Naive thymus-derived CD4-positive, alpha-beta T cell (primary cell): ENCODE measurements at regions of chr5 and their contacts with region 1.

Region 1: GRCh38 chr5:143002459-143003328 is 232.5 kb downstream of the ARHGAP26 start:
- DNase-seq: peak in 8 of 9 donors; percentile 40 to 66 (median 50)
- ATAC-seq: peak; percentile 86
- H3K4me3 ChIP-seq: peak overlapping the region; percentile 3
- H3K4me3 Mint-ChIP-seq: peak overlapping the region; percentile 22 to 80 (median 62)
- H3K27ac ChIP-seq: peak overlapping the region; percentile 68
- H3K27ac Mint-ChIP-seq: peak overlapping the region; percentile 78 to 98 (median 90)
- H3K4me1 ChIP-seq: peaks cover 31 to 66% of the 10 kb centered on the region in 2 donors
- H3K4me1 Mint-ChIP-seq: peaks cover 37 to 90% (median 50%) of the 10 kb centered on the region in 7 donors
- H3K27me3 ChIP-seq: no peaks in the 10 kb centered on the region
- H3K27me3 Mint-ChIP-seq: no peaks in the 10 kb centered on the region

Region 2: DNA sequence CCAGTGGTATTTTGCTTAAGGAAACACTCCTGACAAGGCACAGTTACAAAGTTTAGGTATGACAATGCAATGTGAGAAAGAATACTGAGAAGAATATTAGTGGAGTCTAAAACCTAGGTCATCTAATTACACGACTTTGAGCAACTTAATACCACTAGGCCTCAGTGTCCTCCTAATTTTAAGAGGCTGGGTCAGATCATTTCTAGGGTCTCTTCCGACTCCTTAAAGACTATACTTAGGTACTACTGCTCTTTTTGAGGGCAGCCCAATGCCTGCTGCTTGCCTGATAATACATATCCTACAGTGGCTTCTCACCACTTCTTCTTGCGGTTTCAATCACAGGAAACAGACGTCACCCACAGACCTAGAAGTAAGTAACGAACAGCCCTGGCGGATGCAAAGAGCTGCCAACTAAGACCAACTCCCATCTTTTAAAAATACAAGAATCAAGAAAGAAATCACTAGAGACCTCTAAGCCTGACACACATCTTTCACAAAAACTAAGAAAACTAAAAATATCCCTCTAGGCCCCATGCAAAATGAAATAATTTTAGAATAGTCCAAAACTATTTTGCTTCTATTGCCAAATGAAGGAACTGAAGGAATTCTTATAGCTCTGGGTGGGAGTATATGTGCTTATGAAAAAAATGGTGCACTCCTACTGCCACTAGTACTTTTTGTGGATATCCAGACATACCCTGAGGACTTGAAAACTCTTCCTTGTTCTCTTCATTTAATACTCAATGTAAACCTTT is 1397.0 kb before region 1 on chr5:
- CTCF ChIA-PET with region 1: no interaction called
- POLR2A ChIA-PET with region 1: no interaction called
- intact Hi-C with region 1: loop called in 1 of 2 experiments (anchors 10 kb)
- DNase-seq: peak in 8 of 9 donors; percentile 60 to 90 (median 88)
- ATAC-seq: peak; percentile 95
- H3K4me3 ChIP-seq: peak overlapping the region; percentile 37
- H3K4me3 Mint-ChIP-seq: peak overlapping the region; percentile 13 to 88 (median 80)
- H3K27ac ChIP-seq: peak overlapping the region; percentile 72
- H3K27ac Mint-ChIP-seq: peak overlapping the region; percentile 83 to 96 (median 89)
- H3K4me1 ChIP-seq: peaks cover 86 to 87% of the 10 kb centered on the region in 2 donors
- H3K4me1 Mint-ChIP-seq: peaks cover 60 to 97% (median 90%) of the 10 kb centered on the region in 7 donors
- H3K27me3 ChIP-seq: no peaks in the 10 kb centered on the region
- H3K27me3 Mint-ChIP-seq: no peaks in the 10 kb centered on the region

Region 3: GRCh38 chr5:142012792-142013388 is 989.8 kb before region 1 on chr5 and contains the start of gene GNPDA1:
- CTCF ChIA-PET with region 1: no interaction called
- POLR2A ChIA-PET with region 1: no interaction called
- intact Hi-C with region 1: loop called in 1 of 2 experiments (anchors 10 kb)
- DNase-seq: peak; percentile 38 to 81 (median 54)
- ATAC-seq: peak; percentile 87
- H3K4me3 ChIP-seq: peak within 1 kb of the TSS; percentile 68
- H3K4me3 Mint-ChIP-seq: peak within 1 kb of the TSS; percentile 76 to 93 (median 88)
- H3K27ac ChIP-seq: peak within 1 kb of the TSS; percentile 76
- H3K27ac Mint-ChIP-seq: peak within 1 kb of the TSS; percentile 87 to 93 (median 90)
- H3K4me1 ChIP-seq: peaks cover 40 to 53% of the 10 kb centered on the region in 2 donors
- H3K4me1 Mint-ChIP-seq: peaks cover 34 to 86% (median 80%) of the 10 kb centered on the region in 7 donors
- H3K27me3 ChIP-seq: no peaks in the 10 kb centered on the region
- H3K27me3 Mint-ChIP-seq: no peaks in the 10 kb centered on the region
- total RNA-seq, gene GNPDA1: 13.3 to 60.4 (median 26.4) TPM

Region 4: GRCh38 chr5:142977363-142978051 is 25.2 kb before region 1 on chr5:
- CTCF ChIA-PET with region 1: no interaction called
- POLR2A ChIA-PET with region 1: no interaction called
- intact Hi-C with region 1: loop called (anchors 1 to 2 kb)
- DNase-seq: peak in 2 of 9 donors; percentile 6 to 45
- ATAC-seq: peak; percentile 92
- H3K4me3 ChIP-seq: peak overlapping the region; percentile 15
- H3K4me3 Mint-ChIP-seq: peak overlapping the region in 2 of 10 donors; percentile 53 to 82
- H3K27ac ChIP-seq: no peak overlapping the region
- H3K27ac Mint-ChIP-seq: peak overlapping the region in 6 of 9 donors; percentile 20 to 95 (median 42)
- H3K4me1 ChIP-seq: peaks cover 0 to 93% of the 10 kb centered on the region in 2 donors
- H3K4me1 Mint-ChIP-seq: peaks cover 19 to 88% (median 45%) of the 10 kb centered on the region in 7 donors
- H3K27me3 ChIP-seq: no peaks in the 10 kb centered on the region
- H3K27me3 Mint-ChIP-seq: no peaks in the 10 kb centered on the region

Region 5: GRCh38 chr5:143222287-143223231 is 219.9 kb after region 1 on chr5:
- CTCF ChIA-PET with region 1: no interaction called
- POLR2A ChIA-PET with region 1: no interaction called
- intact Hi-C with region 1: loop called in 1 of 2 experiments (anchors 1 kb)
- DNase-seq: peak; percentile 13 to 55 (median 27)
- ATAC-seq: peak; percentile 81
- H3K4me3 ChIP-seq: peak overlapping the region; percentile 7
- H3K4me3 Mint-ChIP-seq: peak overlapping the region; percentile 9 to 80 (median 54)
- H3K27ac ChIP-seq: peak overlapping the region; percentile 40
- H3K27ac Mint-ChIP-seq: peak overlapping the region; percentile 60 to 94 (median 88)
- H3K4me1 ChIP-seq: peaks cover 0 to 30% of the 10 kb centered on the region in 2 donors
- H3K4me1 Mint-ChIP-seq: peaks cover 33 to 76% (median 40%) of the 10 kb centered on the region in 7 donors
- H3K27me3 ChIP-seq: no peaks in the 10 kb centered on the region
- H3K27me3 Mint-ChIP-seq: no peaks in the 10 kb centered on the region

Region 6: DNA sequence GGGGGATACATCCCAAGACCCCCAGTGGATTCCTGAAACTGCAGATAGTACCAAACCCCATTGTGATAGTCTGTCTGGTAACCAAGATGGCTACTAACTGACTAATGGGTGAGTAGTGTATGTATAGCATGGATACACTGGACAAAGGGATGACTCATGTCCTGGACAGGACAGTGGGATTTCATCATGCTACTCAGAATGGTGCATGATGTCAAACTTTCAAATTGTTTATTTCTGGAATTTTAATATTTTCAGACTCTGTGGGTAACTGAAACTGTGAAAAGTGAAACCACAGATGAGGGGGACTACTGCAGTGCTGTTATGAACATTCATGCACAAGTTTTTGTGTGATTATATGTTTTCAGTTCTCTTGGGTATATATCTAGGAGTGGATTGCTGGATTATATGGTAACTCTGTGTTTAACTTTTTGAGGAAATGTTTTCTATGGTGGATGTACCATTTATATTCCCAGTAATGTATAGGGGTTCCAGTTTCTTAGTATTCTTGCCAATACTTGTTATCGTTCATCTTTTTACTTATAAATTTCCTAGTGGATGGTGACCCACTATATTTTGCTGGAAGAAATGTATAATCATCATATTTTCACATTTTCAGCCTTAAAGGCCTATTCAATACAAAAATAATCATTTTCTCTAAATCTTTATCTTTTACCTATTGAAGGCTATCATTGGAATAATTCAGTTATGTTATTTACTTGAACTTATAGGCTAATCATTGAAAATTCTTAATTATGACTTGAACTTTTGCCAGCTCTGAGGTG is 259.9 kb after region 1 on chr5:
- CTCF ChIA-PET with region 1: no interaction called
- POLR2A ChIA-PET with region 1: no interaction called
- intact Hi-C with region 1: no loop called
- DNase-seq: no peak
- ATAC-seq: peak; percentile 82
- H3K4me3 ChIP-seq: no peak overlapping the region
- H3K4me3 Mint-ChIP-seq: no peak overlapping the region
- H3K27ac ChIP-seq: no peak overlapping the region
- H3K27ac Mint-ChIP-seq: no peak overlapping the region
- H3K4me1 ChIP-seq: no peaks in the 10 kb centered on the region
- H3K4me1 Mint-ChIP-seq: peaks cover 0 to 4% (median 0%) of the 10 kb centered on the region in 7 donors
- H3K27me3 ChIP-seq: no peaks in the 10 kb centered on the region
- H3K27me3 Mint-ChIP-seq: no peaks in the 10 kb centered on the region

Region 7: GRCh38 chr5:143968011-143968878 is 965.6 kb after region 1 on chr5:
- CTCF ChIA-PET with region 1: interaction called, 3 read pairs
- POLR2A ChIA-PET with region 1: no interaction called
- intact Hi-C with region 1: loop called (anchors 1 to 5 kb)
- DNase-seq: peak in 6 of 9 donors; percentile 13 to 43 (median 27)
- ATAC-seq: no peak
- H3K4me3 ChIP-seq: no peak overlapping the region
- H3K4me3 Mint-ChIP-seq: no peak overlapping the region
- H3K27ac ChIP-seq: no peak overlapping the region
- H3K27ac Mint-ChIP-seq: no peak overlapping the region
- H3K4me1 ChIP-seq: no peaks in the 10 kb centered on the region
- H3K4me1 Mint-ChIP-seq: peaks cover 0 to 6% (median 0%) of the 10 kb centered on the region in 7 donors
- H3K27me3 ChIP-seq: no peaks in the 10 kb centered on the region
- H3K27me3 Mint-ChIP-seq: peaks cover 6 to 27% (median 22%) of the 10 kb centered on the region in 5 donors